ENCODE measurements at regions of chr16 and their contacts with region 1.

Region 1: GRCh38 chr16:10918294-10919002 is 23.8 kb downstream of the DEXI start:
- DNase-seq: peak; percentile 93
- H3K4me3 Mint-ChIP-seq: no peak overlapping the region
- H3K27ac Mint-ChIP-seq: no peak overlapping the region
- H3K4me1 Mint-ChIP-seq: no peaks in the 10 kb centered on the region
- H3K27me3 Mint-ChIP-seq: no peaks in the 10 kb centered on the region
- CTCF ChIP-seq: peak; percentile 90

Region 2: DNA sequence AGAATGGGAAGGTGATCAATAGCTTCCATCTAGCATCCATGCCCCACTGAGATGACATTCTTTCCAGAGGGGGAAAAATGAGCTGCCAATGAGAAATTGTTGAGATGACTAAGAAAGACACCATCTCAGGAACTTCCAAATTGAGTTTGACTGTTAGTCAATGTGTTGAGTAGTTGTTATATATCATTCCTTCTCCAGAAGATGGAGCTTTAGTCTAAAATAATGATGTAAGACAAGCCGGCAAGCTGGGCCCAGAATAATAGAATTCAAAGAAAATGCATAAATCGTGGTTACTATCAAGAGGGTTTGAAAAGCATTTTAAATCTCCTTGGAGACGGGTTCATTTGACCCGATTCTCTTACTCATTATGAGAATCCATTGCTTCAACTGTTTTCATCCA is 603.6 kb before region 1 on chr16:
- CTCF ChIA-PET with region 1: interaction called, 10 read pairs
- POLR2A ChIA-PET with region 1: interaction called, 3 read pairs
- intact Hi-C with region 1: no loop called
- DNase-seq: peak; percentile 25
- H3K4me3 Mint-ChIP-seq: no peak overlapping the region
- H3K27ac Mint-ChIP-seq: no peak overlapping the region
- H3K4me1 Mint-ChIP-seq: no peaks in the 10 kb centered on the region
- H3K27me3 Mint-ChIP-seq: no peaks in the 10 kb centered on the region
- CTCF ChIP-seq: peak; percentile 35

Region 3: DNA sequence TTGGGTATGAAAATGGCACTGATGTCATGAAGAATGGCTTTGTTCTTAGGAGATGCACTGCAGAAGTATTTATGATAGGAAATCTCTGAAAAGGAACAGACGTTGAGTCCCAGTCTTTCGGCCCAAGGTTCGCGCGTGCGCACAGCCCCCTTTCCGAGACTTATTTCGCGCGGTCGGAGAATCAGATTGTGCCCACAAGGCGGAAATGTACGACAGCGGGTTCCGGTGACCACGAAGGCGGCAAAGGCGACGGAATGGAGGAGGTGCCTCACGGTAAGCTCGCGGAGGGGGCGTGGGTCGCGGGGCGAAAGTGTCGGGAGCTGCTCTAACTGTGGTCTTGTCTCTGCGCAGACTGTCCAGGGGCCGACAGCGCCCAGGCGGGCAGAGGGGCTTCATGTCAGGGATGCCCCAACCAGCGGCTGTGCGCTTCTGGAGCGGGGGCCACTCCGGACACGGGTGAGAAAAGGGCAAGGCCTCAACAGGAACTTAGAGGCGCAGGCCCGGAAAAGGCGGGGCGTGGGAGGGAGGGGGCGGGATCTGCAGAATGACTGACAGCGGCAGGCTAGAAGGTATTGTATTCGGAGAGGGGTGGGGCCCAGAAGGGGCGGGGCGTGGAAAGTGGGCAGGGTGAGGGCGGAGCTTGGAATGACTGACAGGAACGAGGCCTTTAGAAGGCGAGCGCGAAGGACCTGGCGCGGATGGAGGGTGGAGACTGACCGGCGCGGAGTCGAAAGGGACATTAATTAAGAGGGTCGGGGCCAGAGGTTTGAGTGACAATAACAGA is 174.6 kb before region 1 on chr16 and contains the start of gene NUBP1:
- CTCF ChIA-PET with region 1: interaction called, 37 read pairs
- POLR2A ChIA-PET with region 1: interaction called, 8 read pairs
- intact Hi-C with region 1: loop called (anchors 2 kb)
- DNase-seq: peak; percentile 98
- H3K4me3 Mint-ChIP-seq: peak within 1 kb of the TSS; percentile 95
- H3K27ac Mint-ChIP-seq: peak within 1 kb of the TSS; percentile 100
- H3K4me1 Mint-ChIP-seq: peaks cover 16% of the 10 kb centered on the region
- H3K27me3 Mint-ChIP-seq: no peaks in the 10 kb centered on the region
- CTCF ChIP-seq: no peak
- total RNA-seq, gene NUBP1: 17.3 and 17.8 TPM in 2 replicates

Region 4: DNA sequence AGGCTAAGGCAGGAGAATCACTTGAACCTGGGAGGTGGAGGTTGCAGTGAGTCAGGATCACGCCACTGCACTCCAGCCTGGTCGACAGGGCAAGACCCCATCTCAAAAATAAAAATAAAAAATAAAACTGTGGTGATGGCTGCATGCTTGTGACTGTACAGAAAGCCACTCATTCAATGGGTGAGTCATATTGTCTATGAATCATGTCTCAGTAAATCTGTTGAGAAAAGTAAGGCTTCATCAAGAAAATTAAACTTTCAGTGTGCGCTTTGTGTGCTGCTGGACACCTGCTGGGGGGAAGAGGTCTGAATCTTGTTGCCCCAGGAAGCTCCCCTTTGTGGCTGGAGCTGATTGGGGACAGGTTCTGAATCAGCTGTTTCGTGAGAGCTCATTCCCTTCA is 163.5 kb before region 1 on chr16:
- CTCF ChIA-PET with region 1: interaction called, 6 read pairs
- POLR2A ChIA-PET with region 1: interaction called, 3 read pairs
- intact Hi-C with region 1: loop called (anchors 5 kb)
- DNase-seq: peak; percentile 34
- H3K4me3 Mint-ChIP-seq: no peak overlapping the region
- H3K27ac Mint-ChIP-seq: no peak overlapping the region
- H3K4me1 Mint-ChIP-seq: peaks cover 11% of the 10 kb centered on the region
- H3K27me3 Mint-ChIP-seq: no peaks in the 10 kb centered on the region
- CTCF ChIP-seq: no peak

Region 5: DNA sequence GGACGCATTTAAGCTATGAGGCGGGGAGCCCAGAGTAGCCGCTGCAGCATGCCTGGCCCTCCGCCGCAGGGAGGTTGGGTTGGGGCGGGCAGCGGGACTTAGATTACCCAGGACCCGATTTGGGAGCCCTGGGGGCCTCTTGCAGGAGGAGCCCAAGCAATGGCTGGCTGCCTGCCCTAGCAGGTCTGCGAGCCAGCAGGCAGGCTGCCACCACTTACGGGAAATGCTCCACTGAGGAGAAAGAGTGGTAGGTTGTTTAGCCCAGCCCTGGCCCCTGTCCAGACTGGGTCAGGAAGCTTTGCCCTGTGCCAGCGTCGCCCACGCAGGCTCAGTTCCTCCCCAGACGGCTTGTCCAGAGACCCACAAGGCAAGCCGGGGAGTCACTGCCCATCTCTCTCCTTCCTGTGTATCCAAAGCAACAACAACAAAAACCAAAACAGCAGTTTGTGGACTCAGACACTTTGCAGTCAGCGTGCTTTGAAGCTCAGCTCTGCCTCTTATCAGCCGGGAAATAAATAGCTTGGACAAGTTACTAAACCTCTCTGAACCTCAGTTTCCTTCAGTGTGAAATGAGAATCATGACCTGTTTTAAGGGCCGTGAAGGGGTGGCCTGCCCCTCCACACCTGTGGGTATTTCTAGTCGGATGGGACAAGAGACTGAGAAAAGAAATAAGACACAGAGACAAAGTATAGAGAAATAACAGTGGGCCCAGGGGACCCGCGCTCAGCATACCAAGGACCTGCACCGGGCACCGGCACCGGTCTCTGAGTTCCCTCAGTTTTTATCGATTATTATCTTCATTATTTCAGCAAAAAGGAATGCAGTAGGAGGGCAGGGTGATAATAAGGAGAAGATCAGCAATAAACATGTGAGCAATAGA is 89.4 kb before region 1 on chr16:
- CTCF ChIA-PET with region 1: interaction called, 6 read pairs
- POLR2A ChIA-PET with region 1: no interaction called
- intact Hi-C with region 1: loop called (anchors 1 kb)
- DNase-seq: peak; percentile 99
- H3K4me3 Mint-ChIP-seq: peak overlapping the region; percentile 55
- H3K27ac Mint-ChIP-seq: peak overlapping the region; percentile 89
- H3K4me1 Mint-ChIP-seq: peaks cover 19% of the 10 kb centered on the region
- H3K27me3 Mint-ChIP-seq: no peaks in the 10 kb centered on the region
- CTCF ChIP-seq: no peak

Region 6: GRCh38 chr16:10876799-10877341 is 41.6 kb before region 1 on chr16 and contains the start of gene CIITA:
- CTCF ChIA-PET with region 1: interaction called, 15 read pairs
- POLR2A ChIA-PET with region 1: interaction called, 4 read pairs
- intact Hi-C with region 1: no loop called
- DNase-seq: peak; percentile 94
- H3K4me3 Mint-ChIP-seq: no peak within 1 kb of the TSS
- H3K27ac Mint-ChIP-seq: no peak within 1 kb of the TSS
- H3K4me1 Mint-ChIP-seq: peaks cover 13% of the 10 kb centered on the region
- H3K27me3 Mint-ChIP-seq: peaks cover 40% of the 10 kb centered on the region
- CTCF ChIP-seq: no peak
- total RNA-seq, gene CIITA: 0.12 TPM in 1 of 2 replicates, not detected in the other

Region 7: GRCh38 chr16:10981697-10982216 is 63.3 kb after region 1 on chr16:
- CTCF ChIA-PET with region 1: no interaction called
- POLR2A ChIA-PET with region 1: no interaction called
- intact Hi-C with region 1: no loop called
- DNase-seq: peak; percentile 29
- H3K4me3 Mint-ChIP-seq: no peak overlapping the region
- H3K27ac Mint-ChIP-seq: no peak overlapping the region
- H3K4me1 Mint-ChIP-seq: no peaks in the 10 kb centered on the region
- H3K27me3 Mint-ChIP-seq: no peaks in the 10 kb centered on the region
- CTCF ChIP-seq: peak; percentile 12